ENCODE measurements at regions of chrX and their contacts with region 1.

Region 1: GRCh38 chrX:136028251-136028984 is 43.2 kb downstream of the SLC9A6 start:
- DNase-seq: no peak
- ATAC-seq: peak; percentile 64

Region 2: GRCh38 chrX:135713795-135714194 is 314.6 kb before region 1 on chrX:
- intact Hi-C with region 1: no loop called
- DNase-seq: no peak
- ATAC-seq: no peak

Region 3: DNA sequence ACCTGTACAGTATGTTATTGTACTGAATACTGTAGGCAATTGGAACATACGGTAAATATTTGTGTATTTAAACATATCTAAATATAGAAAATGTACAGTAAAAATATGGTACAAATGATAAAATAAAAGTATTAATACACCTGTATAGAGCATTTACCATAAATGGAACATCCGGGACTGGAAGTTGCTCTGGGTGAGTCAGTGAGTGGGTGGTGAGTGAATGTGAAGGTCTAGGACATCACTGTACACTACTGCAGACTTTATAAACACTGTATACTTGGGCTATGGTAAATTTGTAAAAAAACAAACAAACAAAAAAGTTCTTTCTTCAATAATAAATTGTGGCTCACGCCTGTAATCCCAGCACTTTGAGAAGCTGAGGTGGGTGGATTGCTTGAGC is 66.5 kb after region 1 on chrX:
- intact Hi-C with region 1: no loop called
- DNase-seq: no peak
- ATAC-seq: no peak

Region 4: GRCh38 chrX:136159611-136160025 is 131.2 kb after region 1 on chrX:
- intact Hi-C with region 1: loop called in 1 of 2 experiments (anchors 10 kb)
- DNase-seq: no peak
- ATAC-seq: peak; percentile 76

Region 5: DNA sequence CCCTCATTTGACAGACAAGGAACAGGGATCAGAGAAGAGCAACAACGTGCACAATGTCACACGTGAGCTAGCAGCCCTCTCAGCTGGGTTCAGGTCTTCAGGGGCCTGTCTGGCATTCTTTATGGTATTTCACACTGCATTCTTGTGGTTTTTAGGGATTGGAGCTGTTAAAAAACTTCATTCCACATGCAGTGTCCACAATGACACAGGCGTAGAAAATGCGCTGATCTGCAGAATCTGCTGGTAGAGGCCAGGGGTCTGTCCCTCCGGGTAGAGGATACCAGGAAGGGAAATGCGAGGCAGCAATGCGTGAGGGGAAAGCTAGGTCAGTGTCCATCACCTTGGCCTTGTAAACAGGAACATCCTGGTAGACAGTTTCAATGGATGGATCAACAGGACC is 186.1 kb after region 1 on chrX:
- intact Hi-C with region 1: loop called in 1 of 2 experiments (anchors 10 kb)
- DNase-seq: no peak
- ATAC-seq: no peak

Region 6: GRCh38 chrX:136227948-136228838 is 199.8 kb after region 1 on chrX:
- intact Hi-C with region 1: no loop called
- DNase-seq: no peak
- ATAC-seq: no peak

Region 7: GRCh38 chrX:136268051-136269048 is 239.9 kb after region 1 on chrX:
- intact Hi-C with region 1: loop called in 1 of 2 experiments (anchors 5 kb)
- DNase-seq: peak in 1 of 2 donors; percentile 39
- ATAC-seq: peak; percentile 51